Heart right ventricle (tissue), 16 donors: ENCODE measurements at regions of chr1 and their contacts with region 1.

Region 1: GRCh38 chr1:200802865-200803512 is 64.3 kb downstream of the CAMSAP2 start:
- DNase-seq: peak; percentile 50 to 79
- ATAC-seq: peak; percentile 67 to 91 (median 87)
- H3K4me3 ChIP-seq: no peak overlapping the region
- H3K27ac ChIP-seq: no peak overlapping the region
- H3K4me1 ChIP-seq: peaks cover 0 to 19% (median 9%) of the 10 kb centered on the region in 9 donors
- H3K27me3 ChIP-seq: no peaks in the 10 kb centered on the region
- CTCF ChIP-seq: peak; percentile 79 to 97 (median 92)

Region 2: GRCh38 chr1:200628223-200628881 is 174.6 kb before region 1 on chr1:
- intact Hi-C with region 1: loop called in 6 of 10 experiments (anchors 2 to 10 kb)
- DNase-seq: no peak
- ATAC-seq: peak in 2 of 8 donors; percentile 29 to 38
- H3K4me3 ChIP-seq: no peak overlapping the region
- H3K27ac ChIP-seq: peak overlapping the region in 1 of 10 donors; percentile 26
- H3K4me1 ChIP-seq: peaks cover 0 to 25% (median 0%) of the 10 kb centered on the region in 9 donors
- H3K27me3 ChIP-seq: no peaks in the 10 kb centered on the region
- CTCF ChIP-seq: no peak

Region 3: GRCh38 chr1:200669314-200670241 is 133.4 kb before region 1 on chr1 and contains the start of gene DDX59:
- intact Hi-C with region 1: loop called in 7 of 10 experiments (anchors 2 to 10 kb)
- DNase-seq: peak; percentile 95 to 97
- ATAC-seq: peak; percentile 93 to 98 (median 96)
- H3K4me3 ChIP-seq: peak within 1 kb of the TSS; percentile 71 to 98 (median 88)
- H3K27ac ChIP-seq: peak within 1 kb of the TSS; percentile 98 to 100 (median 100)
- H3K4me1 ChIP-seq: peaks cover 4 to 49% (median 28%) of the 10 kb centered on the region in 9 donors
- H3K27me3 ChIP-seq: no peaks in the 10 kb centered on the region
- CTCF ChIP-seq: peak in 1 of 9 donors; percentile 12
- total RNA-seq, gene DDX59: 13.5 to 16.7 (median 14.5) TPM

Region 4: GRCh38 chr1:200738740-200739498 is 64.1 kb before region 1 on chr1 and contains the start of gene CAMSAP2:
- intact Hi-C with region 1: loop called in 5 of 10 experiments (anchors 2 to 5 kb)
- DNase-seq: peak; percentile 91 to 92
- ATAC-seq: peak; percentile 91 to 97 (median 93)
- H3K4me3 ChIP-seq: peak within 1 kb of the TSS; percentile 69 to 98 (median 90)
- H3K27ac ChIP-seq: peak within 1 kb of the TSS; percentile 97 to 100 (median 100)
- H3K4me1 ChIP-seq: peaks cover 5 to 47% (median 36%) of the 10 kb centered on the region in 9 donors
- H3K27me3 ChIP-seq: peaks cover 0 to 39% (median 0%) of the 10 kb centered on the region in 7 donors
- CTCF ChIP-seq: no peak
- total RNA-seq, gene CAMSAP2: 36.4 to 47.1 (median 38.1) TPM